MCF 10A (cell line): ENCODE measurements at regions of chr11 and their contacts with region 1.

Region 1: GRCh38 chr11:114017723-114018122 is 41.8 kb upstream of the ZBTB16 start:
- DNase-seq: peak; percentile 41
- H3K4me3 Mint-ChIP-seq: no peak overlapping the region
- H3K27ac Mint-ChIP-seq: peak overlapping the region; percentile 63
- H3K4me1 Mint-ChIP-seq: peaks cover 7% of the 10 kb centered on the region
- H3K27me3 Mint-ChIP-seq: peaks cover 3% of the 10 kb centered on the region
- CTCF ChIP-seq: no peak

Region 2: DNA sequence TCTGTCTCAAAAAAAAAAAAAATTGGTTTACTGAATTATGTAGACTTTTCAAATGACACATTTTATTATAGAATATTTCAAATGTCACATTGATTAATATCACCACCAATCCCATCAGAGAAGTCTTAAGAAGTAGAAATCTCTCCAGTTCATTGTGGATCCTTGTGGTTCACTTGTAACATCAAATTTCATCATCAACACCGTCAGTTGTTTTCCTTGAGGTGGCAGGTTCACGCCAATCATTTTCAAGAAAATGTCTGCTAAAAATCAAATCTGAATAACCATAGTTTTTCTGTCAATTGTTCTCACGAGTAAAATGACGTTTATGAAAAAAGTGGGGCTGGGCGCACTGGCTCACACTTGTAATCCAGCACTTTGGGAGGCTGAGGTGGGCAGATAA is 362.0 kb before region 1 on chr11:
- CTCF ChIA-PET with region 1: no interaction called
- POLR2A ChIA-PET with region 1: no interaction called
- intact Hi-C with region 1: no loop called
- DNase-seq: no peak
- H3K4me3 Mint-ChIP-seq: no peak overlapping the region
- H3K27ac Mint-ChIP-seq: no peak overlapping the region
- H3K4me1 Mint-ChIP-seq: no peaks in the 10 kb centered on the region
- H3K27me3 Mint-ChIP-seq: peaks cover 22% of the 10 kb centered on the region
- CTCF ChIP-seq: no peak

Region 3: GRCh38 chr11:114036156-114036811 is 18.6 kb after region 1 on chr11:
- CTCF ChIA-PET with region 1: interaction called, 15 read pairs
- POLR2A ChIA-PET with region 1: no interaction called
- intact Hi-C with region 1: no loop called
- DNase-seq: peak; percentile 84
- H3K4me3 Mint-ChIP-seq: peak overlapping the region; percentile 68
- H3K27ac Mint-ChIP-seq: peak overlapping the region; percentile 70
- H3K4me1 Mint-ChIP-seq: peaks cover 27% of the 10 kb centered on the region
- H3K27me3 Mint-ChIP-seq: no peaks in the 10 kb centered on the region
- CTCF ChIP-seq: peak; percentile 82